H1 (cell line): ENCODE measurements at regions of chr19 and their contacts with region 1.

Region 1: DNA sequence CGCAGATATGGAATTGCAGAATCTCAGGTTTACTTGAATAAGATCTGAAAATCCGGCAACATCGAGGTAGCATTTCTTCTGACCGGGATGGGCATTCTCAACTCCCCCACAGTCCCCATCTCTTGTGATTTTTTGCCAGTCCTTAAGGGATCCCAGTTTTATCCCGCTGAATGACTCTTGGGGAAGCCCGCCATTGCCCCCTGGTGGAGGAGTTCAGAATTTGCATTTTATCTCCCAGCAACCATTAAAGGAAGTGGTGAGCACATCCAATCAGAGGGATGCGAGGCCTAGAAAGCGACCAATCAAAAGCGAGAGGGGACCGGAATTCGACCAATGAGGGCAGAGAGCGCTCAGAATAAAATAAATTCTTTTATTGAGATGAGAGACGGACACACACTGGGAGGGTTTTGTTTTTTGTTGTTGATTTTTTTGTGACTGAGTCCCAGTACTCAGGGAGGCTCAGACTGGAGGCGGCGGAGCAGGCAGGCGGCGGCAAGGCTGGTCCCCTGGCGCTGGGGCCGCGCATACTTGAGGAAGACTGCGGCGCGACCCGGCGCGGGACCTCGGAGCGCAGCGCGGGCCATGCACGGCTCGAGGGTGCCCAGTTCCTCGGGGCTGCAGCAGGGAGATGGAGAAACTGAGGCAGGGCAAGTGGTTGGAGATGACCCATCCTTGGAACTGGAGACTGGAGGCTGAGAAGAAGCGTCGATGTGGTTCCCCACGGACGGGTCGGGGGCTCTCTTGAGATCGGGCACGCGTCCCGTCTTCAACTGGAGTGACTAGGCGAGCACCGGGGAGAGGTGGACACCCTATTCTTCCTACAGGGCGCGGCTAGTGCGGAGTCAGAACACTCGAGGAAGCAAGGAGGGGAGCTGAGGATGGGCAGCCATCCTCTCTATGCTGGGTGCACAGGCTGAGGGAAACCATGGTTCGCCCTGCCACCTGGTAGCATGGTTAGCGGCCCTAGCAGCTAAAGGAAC is 4.0 kb upstream of the TTC9B start:
- DNase-seq: peak; percentile 84 to 91
- H3K4me3 ChIP-seq: no peak overlapping the region
- H3K27ac ChIP-seq: no peak overlapping the region
- H3K4me1 ChIP-seq: peaks cover 0 to 4% (median 3%) of the 10 kb centered on the region in 4 experiments; a peak in 5 of 7 replicates
- H3K27me3 ChIP-seq: peaks cover 3 to 28% (median 19%) of the 10 kb centered on the region in 4 experiments
- CTCF ChIP-seq: peak; percentile 48 to 92 (median 84)
- EP300 ChIP-seq: no peak
- POLR2A ChIP-seq: no peak
- RAD21 ChIP-seq: peak; percentile 79 to 87

Region 2: GRCh38 chr19:40139533-40140287 is 82.4 kb before region 1 on chr19:
- CTCF ChIA-PET with region 1: interaction called, 32 read pairs
- POLR2A ChIA-PET with region 1: no interaction called
- DNase-seq: peak in 1 of 2 experiments; percentile 47
- H3K4me3 ChIP-seq: no peak overlapping the region
- H3K27ac ChIP-seq: no peak overlapping the region
- H3K4me1 ChIP-seq: no peaks in the 10 kb centered on the region
- H3K27me3 ChIP-seq: no peaks in the 10 kb centered on the region; a peak in 1 of 7 replicates
- CTCF ChIP-seq: peak in 2 of 3 experiments; percentile 66 to 69; a peak in 3 of 4 replicates
- EP300 ChIP-seq: no peak
- POLR2A ChIP-seq: no peak
- RAD21 ChIP-seq: peak; percentile 94 to 96

Region 3: DNA sequence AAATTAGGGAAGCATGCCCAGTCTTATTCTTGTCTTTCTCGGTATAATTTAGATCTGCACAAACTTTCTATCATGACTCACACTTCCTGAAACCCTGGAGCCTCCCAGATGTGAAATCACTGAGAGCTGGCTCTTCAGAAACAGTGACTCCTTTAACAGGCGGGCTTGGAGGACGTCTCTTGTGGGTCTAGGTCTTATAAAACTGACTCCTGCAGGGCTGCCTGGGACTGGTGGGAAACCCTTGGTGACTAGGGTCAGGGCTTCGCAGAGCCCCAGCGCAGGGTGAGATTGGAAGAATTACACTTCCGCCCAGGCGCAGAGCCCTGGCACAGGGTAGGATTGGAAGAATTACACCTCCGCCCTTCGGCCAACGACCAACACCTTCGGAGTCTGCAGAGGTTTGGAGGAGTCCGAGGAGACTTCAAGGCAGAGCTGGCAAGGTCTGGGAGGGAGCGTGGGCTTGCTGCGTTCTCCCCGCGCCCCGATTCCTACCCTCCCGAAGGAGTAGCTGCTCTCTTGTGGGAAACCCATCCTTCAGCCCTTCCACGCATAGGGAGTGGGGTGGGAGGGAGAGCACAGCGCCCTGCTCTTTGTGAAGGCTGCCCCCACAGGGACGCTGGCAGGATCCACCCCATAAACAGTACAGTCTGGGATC is 74.3 kb before region 1 on chr19:
- CTCF ChIA-PET with region 1: interaction called, 12 read pairs
- POLR2A ChIA-PET with region 1: no interaction called
- DNase-seq: no peak
- H3K4me3 ChIP-seq: no peak overlapping the region
- H3K27ac ChIP-seq: no peak overlapping the region
- H3K4me1 ChIP-seq: no peaks in the 10 kb centered on the region
- H3K27me3 ChIP-seq: no peaks in the 10 kb centered on the region
- CTCF ChIP-seq: no peak
- EP300 ChIP-seq: no peak
- POLR2A ChIP-seq: no peak
- RAD21 ChIP-seq: no peak

Region 4: GRCh38 chr19:40200341-40201099 is 21.6 kb before region 1 on chr19:
- CTCF ChIA-PET with region 1: interaction called, 18 read pairs
- POLR2A ChIA-PET with region 1: no interaction called
- DNase-seq: no peak
- H3K4me3 ChIP-seq: no peak overlapping the region
- H3K27ac ChIP-seq: no peak overlapping the region
- H3K4me1 ChIP-seq: no peaks in the 10 kb centered on the region
- H3K27me3 ChIP-seq: no peaks in the 10 kb centered on the region
- CTCF ChIP-seq: no peak
- EP300 ChIP-seq: no peak
- POLR2A ChIP-seq: no peak
- RAD21 ChIP-seq: no peak

Region 5: DNA sequence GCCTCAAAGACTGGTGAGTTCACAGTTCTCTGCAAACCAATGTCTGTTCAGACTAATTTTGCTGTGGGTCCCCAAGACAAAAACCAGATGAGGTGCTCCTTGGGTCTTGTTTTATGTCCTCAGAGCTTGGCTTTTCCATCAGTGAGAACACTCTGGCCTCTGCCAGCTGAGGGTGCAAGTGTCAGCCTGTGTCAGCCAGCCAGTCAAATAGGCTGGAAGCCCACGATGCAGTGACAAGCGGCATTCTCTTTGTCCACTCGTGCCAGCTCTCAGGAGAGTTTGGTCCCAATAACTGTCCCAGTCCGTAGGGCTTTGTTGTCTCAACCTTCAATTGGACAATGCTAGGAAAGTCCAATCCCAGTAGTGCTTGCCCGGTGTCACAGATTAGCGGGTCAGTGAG is 72.4 kb after region 1 on chr19:
- CTCF ChIA-PET with region 1: no interaction called
- POLR2A ChIA-PET with region 1: no interaction called
- DNase-seq: no peak
- H3K4me3 ChIP-seq: no peak overlapping the region
- H3K27ac ChIP-seq: no peak overlapping the region
- H3K4me1 ChIP-seq: no peaks in the 10 kb centered on the region
- H3K27me3 ChIP-seq: no peaks in the 10 kb centered on the region
- CTCF ChIP-seq: no peak
- EP300 ChIP-seq: no peak
- POLR2A ChIP-seq: no peak
- RAD21 ChIP-seq: no peak